ENCODE measurements at regions of chr12 and their contacts with region 1.

Region 1: DNA sequence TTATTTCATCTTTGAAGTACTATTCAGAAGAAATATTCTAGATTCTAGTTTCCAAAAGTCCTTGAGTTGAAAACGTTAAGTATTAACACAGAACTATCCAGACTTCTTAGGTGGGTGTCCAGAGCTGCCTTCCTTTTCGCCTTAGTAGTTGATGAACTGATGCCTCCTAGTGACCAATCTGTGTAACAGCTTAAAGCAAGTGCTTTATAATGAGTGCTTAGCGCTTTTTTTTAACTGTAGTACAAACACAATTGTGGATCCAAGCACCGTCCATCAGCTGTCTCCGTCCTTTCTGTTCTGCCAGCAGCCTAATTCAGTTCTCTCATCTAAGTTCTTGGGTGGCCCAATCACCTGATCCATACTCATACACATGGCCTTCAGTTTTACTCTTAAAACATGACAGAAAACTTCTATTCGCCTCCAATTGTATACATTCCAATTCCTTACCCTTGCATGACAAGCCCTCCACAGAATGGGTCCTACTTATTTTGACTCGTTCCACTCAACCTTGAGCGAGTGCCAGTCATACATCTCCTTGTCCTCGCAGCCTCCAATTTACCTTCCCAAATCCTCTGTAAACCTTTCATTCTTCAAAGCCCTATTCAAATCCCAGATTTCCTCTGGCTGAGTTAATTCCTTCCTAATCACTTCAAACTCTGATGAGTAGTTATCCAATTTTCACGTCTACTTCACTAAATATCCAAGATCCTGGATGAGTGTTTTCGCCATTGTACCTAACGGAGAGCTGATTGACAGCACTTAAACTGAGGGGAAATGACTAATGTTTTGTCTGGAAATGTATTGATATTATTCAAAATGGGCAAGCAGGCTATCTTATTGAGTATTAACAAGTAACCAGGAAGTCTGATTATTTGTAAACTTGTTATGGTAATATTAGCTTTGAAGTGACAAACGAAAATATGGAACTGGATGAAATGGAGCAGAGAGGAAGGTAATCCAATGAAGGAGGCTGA is 5.8 kb upstream of the PHLDA1 start:
- DNase-seq: peak; percentile 47
- CTCF ChIP-seq: peak; percentile 81

Region 2: GRCh38 chr12:75480469-75480949 is 556.9 kb before region 1 on chr12 and contains the start of gene GLIPR1:
- CTCF ChIA-PET with region 1: interaction called, 24 read pairs
- POLR2A ChIA-PET with region 1: interaction called, 9 read pairs
- DNase-seq: peak; percentile 69
- CTCF ChIP-seq: no peak

Region 3: GRCh38 chr12:75526655-75527511 is 510.5 kb before region 1 on chr12:
- CTCF ChIA-PET with region 1: interaction called, 48 read pairs
- POLR2A ChIA-PET with region 1: no interaction called
- DNase-seq: peak; percentile 45
- CTCF ChIP-seq: peak; percentile 43

Region 4: DNA sequence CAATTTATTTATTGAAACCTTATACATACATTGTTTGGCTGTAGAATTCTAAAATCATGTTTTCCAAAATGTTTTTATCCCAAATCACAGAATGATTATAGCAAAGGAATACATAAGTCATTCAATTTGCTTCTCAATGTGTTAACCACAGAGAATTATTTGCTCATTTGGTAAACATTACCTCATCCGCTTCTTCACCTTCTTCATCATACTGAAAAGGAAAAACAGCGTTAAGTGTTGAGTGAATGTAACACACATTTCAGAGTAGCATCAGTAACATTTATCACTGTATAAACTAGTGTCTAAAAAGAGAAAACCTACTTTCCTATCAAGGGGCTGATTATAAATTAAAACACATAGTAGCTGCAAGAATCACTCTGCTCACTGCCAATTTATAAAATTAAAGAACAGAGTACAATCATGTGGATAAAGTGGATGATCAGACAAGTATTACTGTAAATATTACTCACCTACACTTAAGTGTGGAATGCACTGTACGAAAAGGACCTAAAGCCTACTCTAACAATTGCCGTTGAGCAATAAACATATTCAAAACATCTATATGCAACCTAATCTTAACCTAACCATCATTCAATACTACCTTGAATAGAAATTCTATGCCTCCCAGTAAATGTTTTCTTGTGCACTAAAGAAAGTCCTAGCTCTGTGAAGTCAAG is 12.3 kb after region 1 on chr12:
- CTCF ChIA-PET with region 1: interaction called, 24 read pairs
- POLR2A ChIA-PET with region 1: interaction called, 5 read pairs
- DNase-seq: no peak
- CTCF ChIP-seq: no peak

Region 5: GRCh38 chr12:76529226-76529918 is 492.0 kb after region 1 on chr12:
- CTCF ChIA-PET with region 1: no interaction called
- POLR2A ChIA-PET with region 1: no interaction called
- DNase-seq: no peak
- CTCF ChIP-seq: no peak